Transverse colon (tissue), 4 donors: ENCODE measurements at regions of chr5 and their contacts with region 1.

Region 1: GRCh38 chr5:135332519-135333150 is 66.4 kb downstream of the MACROH2A1 start:
- DNase-seq: no peak
- H3K4me3 ChIP-seq: no peak overlapping the region
- H3K27ac ChIP-seq: no peak overlapping the region
- H3K4me1 ChIP-seq: peaks cover 0 to 3% (median 0%) of the 10 kb centered on the region in 4 donors
- H3K27me3 ChIP-seq: no peaks in the 10 kb centered on the region
- CTCF ChIP-seq: peak; percentile 42 to 57 (median 51)
- EP300 ChIP-seq: no peak
- POLR2A ChIP-seq: no peak

Region 2: DNA sequence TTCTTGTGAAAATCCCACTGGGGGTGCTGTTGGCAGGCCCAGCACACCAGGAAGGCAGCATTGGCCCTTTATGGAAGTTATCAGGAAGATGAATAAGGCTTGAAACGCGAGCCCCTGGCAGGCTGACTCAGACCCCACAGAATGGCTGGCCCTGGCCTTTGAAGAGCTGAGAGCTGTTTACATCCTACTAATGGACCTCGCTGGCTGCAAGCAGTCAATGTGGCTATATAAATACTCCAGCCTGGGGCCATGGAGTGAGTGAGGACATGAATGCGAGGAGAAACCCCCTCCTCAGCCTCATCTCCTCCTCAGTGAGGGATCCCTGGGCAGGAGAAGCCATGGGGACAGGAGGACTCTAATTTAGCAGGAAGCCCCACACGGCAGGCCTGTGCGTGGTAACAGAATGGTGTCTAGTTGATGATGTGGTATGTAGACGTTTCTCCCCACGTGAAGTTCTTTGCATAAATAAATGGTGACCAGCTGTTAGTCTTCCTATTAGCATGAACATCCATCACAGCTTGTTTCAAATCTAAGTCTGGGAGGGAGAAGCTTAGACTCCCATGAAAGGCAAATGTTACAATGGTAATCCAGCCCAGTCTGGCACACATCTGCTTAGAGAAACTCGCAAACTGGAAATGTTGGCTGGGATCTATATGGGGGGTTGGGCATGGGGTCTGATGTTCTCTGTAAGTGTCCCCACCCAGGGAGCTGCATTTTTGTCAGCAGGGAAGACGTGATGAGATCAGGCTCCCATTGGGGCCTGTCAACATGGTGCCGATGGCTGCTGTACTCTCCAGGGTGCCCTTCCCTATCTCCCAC is 123.5 kb before region 1 on chr5:
- in situ Hi-C with region 1: no loop called
- intact Hi-C with region 1: loop called (anchors 5 kb)
- DNase-seq: peak; percentile 32
- H3K4me3 ChIP-seq: no peak overlapping the region
- H3K27ac ChIP-seq: peak overlapping the region; percentile 10 to 68 (median 64)
- H3K4me1 ChIP-seq: peaks cover 0 to 27% (median 15%) of the 10 kb centered on the region in 4 donors
- H3K27me3 ChIP-seq: no peaks in the 10 kb centered on the region
- CTCF ChIP-seq: no peak
- EP300 ChIP-seq: no peak
- POLR2A ChIP-seq: no peak